Activated CD4-positive, alpha-beta memory T cell treated with anti-CD3 and anti-CD28 coated beads for 36 hours (primary cell): ENCODE measurements at regions of chr18 and their contacts with region 1.

Region 1: GRCh38 chr18:57621246-57621604 is 411 bp downstream of the NARS1 start:
- DNase-seq: no peak
- H3K4me3 Mint-ChIP-seq: peak overlapping the region; percentile 91
- H3K27ac Mint-ChIP-seq: peak overlapping the region; percentile 95
- H3K4me1 Mint-ChIP-seq: peaks cover 26% of the 10 kb centered on the region
- H3K27me3 Mint-ChIP-seq: no peaks in the 10 kb centered on the region

Region 2: DNA sequence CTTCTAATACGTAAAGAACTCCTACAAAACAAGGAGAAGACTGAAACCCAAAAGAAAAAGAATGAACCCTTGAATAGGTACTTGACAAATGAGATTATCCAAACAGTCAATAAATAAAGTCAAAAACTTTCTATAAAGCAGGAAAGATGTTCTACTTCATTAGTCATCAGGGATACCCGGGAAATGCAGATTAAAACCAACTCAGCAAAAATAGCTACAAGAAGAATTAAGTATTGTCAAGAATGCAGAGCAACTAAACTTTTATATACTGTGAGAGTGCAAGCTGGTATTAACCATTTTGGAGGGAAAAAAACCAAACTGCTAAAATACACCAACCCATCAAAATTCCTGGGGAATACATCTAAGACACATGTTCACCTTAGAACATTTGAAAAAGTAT is 993.2 kb before region 1 on chr18:
- CTCF ChIA-PET with region 1: no interaction called
- POLR2A ChIA-PET with region 1: no interaction called
- intact Hi-C with region 1: no loop called
- DNase-seq: no peak
- H3K4me3 Mint-ChIP-seq: no peak overlapping the region
- H3K27ac Mint-ChIP-seq: no peak overlapping the region
- H3K4me1 Mint-ChIP-seq: peaks cover 50% of the 10 kb centered on the region
- H3K27me3 Mint-ChIP-seq: no peaks in the 10 kb centered on the region

Region 3: GRCh38 chr18:56638271-56639093 is 982.7 kb before region 1 on chr18 and contains the start of gene TXNL1:
- CTCF ChIA-PET with region 1: no interaction called
- POLR2A ChIA-PET with region 1: no interaction called
- intact Hi-C with region 1: loop called (anchors 5 kb)
- DNase-seq: peak; percentile 100
- H3K4me3 Mint-ChIP-seq: peak within 1 kb of the TSS; percentile 99
- H3K27ac Mint-ChIP-seq: peak within 1 kb of the TSS; percentile 94
- H3K4me1 Mint-ChIP-seq: peaks cover 44% of the 10 kb centered on the region
- H3K27me3 Mint-ChIP-seq: no peaks in the 10 kb centered on the region
- total RNA-seq, gene TXNL1: 68.7 to 68.9 TPM

Region 4: GRCh38 chr18:57586251-57587049 is 34.8 kb before region 1 on chr18 and contains the start of gene FECH:
- CTCF ChIA-PET with region 1: no interaction called
- POLR2A ChIA-PET with region 1: no interaction called
- intact Hi-C with region 1: loop called (anchors 1 kb)
- DNase-seq: peak; percentile 70
- H3K4me3 Mint-ChIP-seq: peak within 1 kb of the TSS; percentile 82
- H3K27ac Mint-ChIP-seq: peak within 1 kb of the TSS; percentile 45
- H3K4me1 Mint-ChIP-seq: peaks cover 14% of the 10 kb centered on the region
- H3K27me3 Mint-ChIP-seq: no peaks in the 10 kb centered on the region
- total RNA-seq, gene FECH: 17.5 to 20.2 TPM

Region 5: DNA sequence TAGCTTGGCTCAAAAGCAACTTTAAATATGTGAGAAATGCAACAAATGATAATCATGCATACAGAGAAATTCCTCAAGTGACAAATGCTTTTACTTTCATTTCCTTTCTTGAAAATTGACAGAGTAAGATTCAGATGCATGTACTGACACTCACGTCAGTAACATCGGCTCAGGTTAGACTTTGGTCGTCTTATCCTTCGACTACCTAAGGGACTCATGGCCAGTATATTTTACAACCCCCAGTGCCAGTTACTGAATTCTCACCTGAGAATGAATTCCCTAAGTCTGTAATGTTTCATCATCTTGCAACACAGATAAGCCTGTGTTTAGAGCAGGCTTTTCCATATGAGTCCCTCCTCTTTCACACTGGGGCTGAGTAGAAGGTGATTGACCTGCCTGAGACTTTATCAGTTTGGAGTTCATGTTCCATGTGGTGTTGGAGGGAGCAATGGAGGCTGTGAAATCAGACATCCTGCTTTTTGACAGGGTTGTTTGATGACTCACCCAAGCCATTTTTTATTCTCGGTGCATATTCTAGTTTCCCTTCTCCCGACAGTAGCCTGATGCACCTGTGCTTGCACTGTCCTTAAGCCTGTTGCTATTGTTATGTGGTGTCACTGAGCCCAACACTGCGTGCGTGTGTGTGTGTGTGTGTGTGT is 212.3 kb after region 1 on chr18:
- CTCF ChIA-PET with region 1: no interaction called
- POLR2A ChIA-PET with region 1: no interaction called
- intact Hi-C with region 1: loop called (anchors 5 kb)
- DNase-seq: peak; percentile 40
- H3K4me3 Mint-ChIP-seq: peak overlapping the region; percentile 21
- H3K27ac Mint-ChIP-seq: peak overlapping the region; percentile 40
- H3K4me1 Mint-ChIP-seq: peaks cover 28% of the 10 kb centered on the region
- H3K27me3 Mint-ChIP-seq: peaks cover 29% of the 10 kb centered on the region

Region 6: DNA sequence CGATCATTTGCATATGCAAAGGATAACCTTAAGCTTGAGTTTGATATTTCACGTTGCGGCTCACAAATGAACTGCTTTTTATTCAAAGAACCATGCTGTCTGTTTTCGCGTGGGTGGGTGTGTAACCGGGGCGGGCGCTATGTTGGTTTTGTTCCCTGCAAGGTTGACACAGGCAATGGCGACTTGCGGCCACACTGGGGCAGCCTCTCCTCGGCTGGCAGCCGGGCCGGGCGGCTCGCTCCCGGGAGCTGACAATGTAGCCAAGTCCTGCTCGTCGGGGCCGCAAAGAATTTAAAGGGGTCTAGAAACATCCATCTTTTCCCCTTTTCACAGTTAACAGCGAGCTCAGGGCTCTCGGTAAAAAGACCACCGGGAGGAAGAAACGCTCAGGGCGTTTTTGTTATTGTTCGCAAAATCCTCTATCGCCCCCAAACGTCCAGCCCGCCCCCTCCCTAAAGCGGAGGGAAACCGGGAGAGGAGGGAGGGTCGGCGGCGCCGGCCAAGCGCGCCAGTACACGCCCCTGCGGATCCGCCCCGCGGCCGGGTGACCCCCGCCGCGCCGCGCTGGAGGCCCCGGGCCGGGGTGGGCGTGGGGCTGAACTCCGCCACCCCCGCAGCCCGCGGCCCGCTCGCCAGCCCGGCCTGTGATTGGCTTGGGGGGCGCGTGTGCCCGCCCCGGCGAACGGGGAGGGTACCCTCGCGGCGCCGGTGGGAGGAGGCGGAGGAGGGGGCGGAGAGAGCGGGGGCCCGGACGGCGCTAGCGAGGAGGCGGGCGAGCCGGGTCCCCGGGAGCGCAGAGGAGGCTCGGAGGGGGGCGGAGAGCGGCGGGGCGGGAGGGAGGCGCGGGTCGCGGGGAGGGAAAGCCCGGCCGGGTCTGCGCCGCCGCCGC is 422.5 kb after region 1 on chr18 and contains the start of gene NEDD4L:
- CTCF ChIA-PET with region 1: no interaction called
- POLR2A ChIA-PET with region 1: no interaction called
- intact Hi-C with region 1: loop called (anchors 2 kb)
- DNase-seq: peak; percentile 89
- H3K4me3 Mint-ChIP-seq: peak within 1 kb of the TSS; percentile 86
- H3K27ac Mint-ChIP-seq: peak within 1 kb of the TSS; percentile 26
- H3K4me1 Mint-ChIP-seq: peaks cover 20% of the 10 kb centered on the region
- H3K27me3 Mint-ChIP-seq: peaks cover 25% of the 10 kb centered on the region
- total RNA-seq, gene NEDD4L: 3.4 to 3.8 TPM

Region 7: DNA sequence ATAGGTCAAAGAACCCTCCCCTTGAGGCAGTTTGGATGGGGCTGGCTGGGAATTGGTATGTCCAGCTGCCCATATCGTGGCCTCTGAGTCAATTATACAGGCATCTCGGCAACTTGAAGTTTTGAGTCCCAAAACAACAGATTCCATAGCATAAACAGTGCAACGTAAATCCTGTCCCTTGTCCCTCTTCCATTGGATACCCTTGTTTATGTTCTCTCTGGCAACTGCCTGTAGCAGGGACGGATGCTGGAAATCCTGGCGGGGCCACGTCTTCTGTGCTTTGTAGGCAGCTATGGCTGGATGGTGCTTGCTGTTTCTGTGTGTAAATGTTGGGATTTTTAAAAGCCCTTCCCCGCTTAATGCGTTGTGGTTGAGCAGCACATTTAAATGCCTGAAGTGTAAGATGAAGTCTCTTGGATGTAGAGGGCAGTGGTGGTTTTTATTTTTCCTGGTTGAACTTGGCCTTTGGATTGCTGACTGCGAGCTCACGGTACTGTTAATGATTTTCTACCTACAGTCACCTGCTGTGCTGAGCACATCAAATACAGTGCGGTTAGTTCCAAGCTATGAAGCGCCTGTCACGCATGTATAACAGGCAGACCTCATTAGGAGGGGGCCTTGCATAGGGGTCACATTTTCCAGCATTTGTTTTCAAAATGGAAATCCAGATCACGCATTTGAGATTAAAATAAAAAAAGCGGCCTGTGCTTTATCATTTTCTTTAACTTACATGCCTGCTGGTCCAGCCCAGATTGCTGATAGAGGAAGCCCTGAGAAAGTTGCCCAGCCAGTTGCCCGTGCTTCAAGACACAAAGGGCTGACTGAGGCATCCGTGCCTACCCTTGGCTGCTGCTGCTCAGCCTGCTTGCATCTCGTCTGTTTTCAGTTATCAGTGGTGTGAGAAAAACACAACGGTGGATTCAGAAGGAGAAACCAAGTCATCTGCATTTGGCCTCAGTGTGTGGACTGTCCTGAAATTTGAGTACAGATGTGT is 507.5 kb after region 1 on chr18:
- CTCF ChIA-PET with region 1: no interaction called
- POLR2A ChIA-PET with region 1: no interaction called
- intact Hi-C with region 1: loop called (anchors 5 kb)
- DNase-seq: no peak
- H3K4me3 Mint-ChIP-seq: no peak overlapping the region
- H3K27ac Mint-ChIP-seq: no peak overlapping the region
- H3K4me1 Mint-ChIP-seq: no peaks in the 10 kb centered on the region
- H3K27me3 Mint-ChIP-seq: no peaks in the 10 kb centered on the region